ENCODE measurements at regions of chr6 and their contacts with region 1.

Region 1: GRCh38 chr6:12011276-12012076 is 636 bp upstream of the HIVEP1 start:
- DNase-seq: peak; percentile 96
- H3K4me3 ChIP-seq: peak overlapping the region in 2 of 3 experiments; percentile 73 to 85
- H3K27ac ChIP-seq: peak overlapping the region; percentile 21
- H3K4me1 ChIP-seq: peaks cover 21% of the 10 kb centered on the region
- H3K27me3 ChIP-seq: no peaks in the 10 kb centered on the region
- CTCF ChIP-seq: no peak

Region 2: DNA sequence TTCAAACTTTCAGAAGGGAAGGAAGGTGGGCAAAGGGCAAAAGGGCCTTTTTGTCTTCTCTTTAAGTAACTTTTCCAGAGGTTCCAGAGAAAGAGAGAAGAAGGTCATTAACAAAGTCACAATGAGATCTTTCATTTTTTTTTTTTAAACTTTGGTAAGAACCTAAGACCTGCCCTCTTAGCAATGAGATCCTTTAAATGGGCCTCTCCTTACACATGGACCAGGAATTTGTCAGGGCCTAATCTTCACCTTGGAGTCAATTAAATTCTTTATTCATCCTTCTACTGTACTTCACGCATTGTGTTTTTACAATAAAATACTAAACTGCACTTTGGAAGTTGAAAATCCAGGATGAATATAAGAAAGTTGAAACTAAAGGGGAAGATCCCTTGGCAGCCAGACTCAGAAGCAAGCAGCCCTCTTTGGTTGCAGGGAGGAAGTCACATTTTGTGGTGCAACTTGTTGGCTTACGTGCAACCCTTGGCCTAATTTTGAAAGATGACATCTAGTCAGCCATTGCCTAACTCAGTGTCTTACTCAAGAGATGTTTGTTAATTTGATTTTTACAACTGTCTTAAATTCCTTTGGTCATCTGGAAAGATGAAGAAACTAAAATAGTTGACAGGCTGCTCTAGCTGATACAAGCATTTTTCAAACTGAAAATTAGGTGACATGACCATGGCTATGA is 485.9 kb before region 1 on chr6:
- CTCF ChIA-PET with region 1: no interaction called
- dilution Hi-C with region 1: no loop called
- in situ Hi-C with region 1: no loop called
- intact Hi-C with region 1: no loop called
- DNase-seq: no peak
- H3K4me3 ChIP-seq: no peak overlapping the region
- H3K27ac ChIP-seq: no peak overlapping the region
- H3K4me1 ChIP-seq: no peaks in the 10 kb centered on the region
- H3K27me3 ChIP-seq: no peaks in the 10 kb centered on the region
- CTCF ChIP-seq: no peak

Region 3: DNA sequence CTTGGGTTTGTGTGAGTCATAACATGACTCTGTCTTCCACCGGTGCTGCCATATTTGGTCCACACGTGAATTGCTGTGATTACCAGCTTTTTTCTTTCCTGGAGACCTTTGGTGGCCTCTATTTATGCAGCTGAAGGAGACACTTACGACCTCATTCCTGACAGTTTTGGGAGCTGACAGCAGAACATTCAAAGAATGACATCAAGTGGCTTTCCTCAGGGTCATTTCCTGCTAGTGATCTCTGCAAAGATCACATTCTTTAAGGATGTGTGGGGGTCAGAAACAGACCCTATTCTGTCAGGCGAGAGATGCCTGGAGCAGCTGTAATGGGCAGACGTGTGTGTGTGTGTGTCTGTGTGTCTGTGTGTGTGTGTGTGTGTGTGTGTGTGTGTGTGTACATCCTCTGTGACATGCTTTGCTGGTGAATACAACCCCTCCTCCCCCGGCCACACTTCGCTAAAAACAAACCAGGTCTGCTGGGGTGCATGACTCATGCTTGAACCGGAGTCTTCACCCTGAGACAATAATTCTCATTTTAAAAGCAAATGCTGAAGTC is 358.4 kb before region 1 on chr6:
- CTCF ChIA-PET with region 1: interaction called, 27 read pairs
- dilution Hi-C with region 1: no loop called
- in situ Hi-C with region 1: no loop called
- intact Hi-C with region 1: loop called (anchors 1 kb)
- DNase-seq: peak; percentile 60
- H3K4me3 ChIP-seq: no peak overlapping the region
- H3K27ac ChIP-seq: no peak overlapping the region
- H3K4me1 ChIP-seq: peaks cover 8% of the 10 kb centered on the region
- H3K27me3 ChIP-seq: no peaks in the 10 kb centered on the region
- CTCF ChIP-seq: no peak

Region 4: DNA sequence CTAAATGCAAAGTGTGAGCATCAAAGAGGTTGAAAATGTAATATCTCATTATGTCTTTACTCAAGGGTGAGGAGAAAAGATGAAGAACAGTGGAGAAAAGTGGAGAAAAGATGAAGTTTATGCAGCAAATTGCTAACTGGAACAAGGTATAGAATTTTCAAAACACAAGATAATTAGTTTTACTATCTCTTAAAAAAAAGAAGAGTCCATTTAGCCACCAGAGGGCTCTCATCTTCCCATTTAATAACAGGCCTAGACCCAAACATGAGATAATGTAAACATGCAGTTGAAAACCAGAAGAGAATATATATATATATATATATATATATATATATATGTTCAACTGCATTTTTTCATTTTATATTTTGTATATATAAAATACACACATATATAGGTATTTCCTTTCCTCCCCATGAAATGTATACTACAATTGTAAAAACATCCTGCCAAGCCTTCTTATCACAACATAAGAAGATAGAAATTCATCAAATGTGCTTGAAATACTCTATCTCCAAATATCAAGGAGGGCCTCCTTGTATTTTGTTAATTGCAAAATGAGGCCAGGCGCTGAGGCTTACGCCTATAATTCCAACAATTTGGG is 311.3 kb before region 1 on chr6:
- CTCF ChIA-PET with region 1: no interaction called
- dilution Hi-C with region 1: no loop called
- in situ Hi-C with region 1: loop called in 1 of 2 experiments (anchors 10 kb)
- intact Hi-C with region 1: loop called (anchors 1 kb)
- DNase-seq: peak; percentile 29
- H3K4me3 ChIP-seq: no peak overlapping the region
- H3K27ac ChIP-seq: no peak overlapping the region
- H3K4me1 ChIP-seq: peaks cover 14% of the 10 kb centered on the region
- H3K27me3 ChIP-seq: no peaks in the 10 kb centered on the region
- CTCF ChIP-seq: peak; percentile 23 to 58

Region 5: DNA sequence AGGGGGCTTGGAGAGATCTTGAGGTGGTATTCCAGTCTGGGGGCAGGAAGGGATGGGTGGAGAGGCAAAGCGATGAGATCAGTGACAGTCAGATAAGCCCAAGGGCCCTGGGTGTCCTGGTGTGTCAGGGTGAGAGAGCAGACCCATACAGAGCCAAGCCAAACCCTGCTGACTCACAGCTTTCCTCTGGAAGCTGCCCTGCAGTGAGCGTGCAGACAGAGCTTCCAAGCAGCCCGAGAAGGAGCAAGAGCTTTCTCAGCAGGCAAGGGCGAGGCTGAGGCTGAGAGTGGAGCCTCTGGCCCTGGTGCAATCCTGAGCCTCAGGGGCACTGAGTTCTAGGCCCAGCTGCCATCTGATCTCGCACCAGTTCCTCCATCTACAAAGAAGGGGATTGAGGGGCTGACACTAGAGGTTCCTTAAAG is 90.4 kb before region 1 on chr6:
- CTCF ChIA-PET with region 1: no interaction called
- dilution Hi-C with region 1: no loop called
- in situ Hi-C with region 1: no loop called
- intact Hi-C with region 1: loop called (anchors 2 kb)
- DNase-seq: peak; percentile 90
- H3K4me3 ChIP-seq: no peak overlapping the region
- H3K27ac ChIP-seq: peak overlapping the region; percentile 37
- H3K4me1 ChIP-seq: peaks cover 13% of the 10 kb centered on the region
- H3K27me3 ChIP-seq: no peaks in the 10 kb centered on the region
- CTCF ChIP-seq: no peak

Region 6: DNA sequence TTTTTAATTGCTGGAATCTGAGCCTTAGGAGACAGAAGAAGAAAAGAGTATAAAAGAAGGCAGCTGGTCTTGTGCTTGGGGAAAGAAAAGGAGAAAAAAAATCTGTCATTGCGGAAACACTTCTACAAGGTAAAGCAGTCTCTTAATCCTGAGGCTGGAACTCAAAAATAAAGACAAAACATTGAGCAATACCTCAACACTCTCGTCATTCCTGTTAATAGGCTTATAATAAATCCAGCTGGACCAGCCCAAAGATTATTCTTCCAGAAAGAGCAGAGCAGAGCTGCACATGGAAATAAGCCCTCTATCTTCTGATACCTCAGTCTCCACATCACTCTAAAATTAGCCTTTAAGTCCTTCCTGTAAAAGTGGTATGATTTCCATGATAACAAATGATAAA is 61.4 kb before region 1 on chr6:
- CTCF ChIA-PET with region 1: no interaction called
- dilution Hi-C with region 1: no loop called
- in situ Hi-C with region 1: no loop called
- intact Hi-C with region 1: no loop called
- DNase-seq: no peak
- H3K4me3 ChIP-seq: no peak overlapping the region
- H3K27ac ChIP-seq: no peak overlapping the region
- H3K4me1 ChIP-seq: no peaks in the 10 kb centered on the region
- H3K27me3 ChIP-seq: no peaks in the 10 kb centered on the region
- CTCF ChIP-seq: no peak

Region 7: GRCh38 chr6:12233693-12234571 is 222.5 kb after region 1 on chr6:
- CTCF ChIA-PET with region 1: no interaction called
- dilution Hi-C with region 1: no loop called
- in situ Hi-C with region 1: no loop called
- intact Hi-C with region 1: loop called (anchors 2 kb)
- DNase-seq: peak; percentile 82
- H3K4me3 ChIP-seq: no peak overlapping the region
- H3K27ac ChIP-seq: no peak overlapping the region
- H3K4me1 ChIP-seq: peaks cover 5% of the 10 kb centered on the region
- H3K27me3 ChIP-seq: no peaks in the 10 kb centered on the region
- CTCF ChIP-seq: peak; percentile 74 to 84